OCI-LY7 (cell line): ENCODE measurements at regions of chr11 and their contacts with region 1.

Region 1: GRCh38 chr11:65134386-65135253 is at the start of gene SYVN1:
- DNase-seq: peak; percentile 96
- H3K4me3 ChIP-seq: peak within 1 kb of the TSS; percentile 98
- H3K27ac ChIP-seq: peak within 1 kb of the TSS; percentile 98
- H3K4me1 ChIP-seq: peaks cover 41% of the 10 kb centered on the region
- CTCF ChIP-seq: no peak
- total RNA-seq, gene SYVN1: 102 and 134 TPM in 2 replicates

Region 2: DNA sequence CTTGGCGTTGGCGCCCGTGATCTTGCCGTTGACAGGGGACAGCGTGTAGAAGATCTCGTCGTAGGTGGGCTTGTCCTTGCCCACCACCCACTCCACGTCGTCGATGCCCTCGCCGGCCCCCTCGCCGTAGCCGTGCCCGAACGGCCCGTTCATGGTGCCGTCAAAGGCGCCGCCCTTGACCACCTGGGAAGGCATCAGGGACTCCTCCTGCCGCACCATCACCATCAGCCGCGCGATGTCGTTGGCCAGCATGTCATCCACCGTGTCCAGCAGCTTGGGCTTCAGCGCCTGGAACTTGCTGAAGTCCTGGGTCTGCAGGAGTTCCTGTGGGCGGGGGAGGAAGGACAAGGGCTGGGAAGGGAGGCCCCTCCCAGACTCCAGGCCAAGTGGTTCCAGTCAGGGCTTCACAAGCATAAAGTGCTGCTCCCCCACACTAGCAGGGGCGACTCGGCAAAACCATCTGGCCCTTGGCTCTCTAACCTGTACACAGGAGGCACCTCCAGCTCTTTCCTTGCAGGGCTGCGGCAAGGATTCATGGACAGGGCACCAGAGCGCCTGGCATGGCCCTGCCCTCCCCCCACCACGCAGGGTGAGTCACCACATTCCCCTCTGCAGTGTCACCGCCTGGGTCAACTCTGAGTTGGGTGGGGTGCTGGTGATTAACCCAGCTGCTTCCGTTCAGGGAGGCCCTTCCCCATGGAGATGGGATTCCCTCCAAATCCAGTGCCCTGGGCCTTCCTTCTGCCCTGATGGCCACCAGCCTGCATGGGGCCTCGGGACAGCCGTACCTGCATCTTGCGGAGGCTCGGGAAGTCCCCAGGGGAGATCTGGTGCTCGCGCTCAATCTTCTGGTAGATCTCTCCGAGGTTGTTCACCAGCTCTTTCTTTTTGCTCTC is 279.8 kb before region 1 on chr11:
- CTCF ChIA-PET with region 1: interaction called, 5 read pairs
- POLR2A ChIA-PET with region 1: no interaction called
- intact Hi-C with region 1: loop called (anchors 5 kb)
- DNase-seq: no peak
- H3K4me3 ChIP-seq: no peak overlapping the region
- H3K27ac ChIP-seq: peak overlapping the region; percentile 92
- H3K4me1 ChIP-seq: peaks cover 90% of the 10 kb centered on the region
- CTCF ChIP-seq: no peak

Region 3: GRCh38 chr11:64969209-64969608 is 165.4 kb before region 1 on chr11:
- CTCF ChIA-PET with region 1: no interaction called
- POLR2A ChIA-PET with region 1: no interaction called
- intact Hi-C with region 1: no loop called
- DNase-seq: no peak
- H3K4me3 ChIP-seq: no peak overlapping the region
- H3K27ac ChIP-seq: no peak overlapping the region
- H3K4me1 ChIP-seq: peaks cover 50% of the 10 kb centered on the region
- CTCF ChIP-seq: no peak

Region 4: GRCh38 chr11:65090628-65091027 is 44.0 kb before region 1 on chr11:
- CTCF ChIA-PET with region 1: no interaction called
- POLR2A ChIA-PET with region 1: no interaction called
- intact Hi-C with region 1: no loop called
- DNase-seq: no peak
- H3K4me3 ChIP-seq: no peak overlapping the region
- H3K27ac ChIP-seq: no peak overlapping the region
- H3K4me1 ChIP-seq: peaks cover 12% of the 10 kb centered on the region
- CTCF ChIP-seq: no peak

Region 5: GRCh38 chr11:65111744-65112414 is 22.7 kb before region 1 on chr11 and contains the start of gene TM7SF2:
- CTCF ChIA-PET with region 1: no interaction called
- POLR2A ChIA-PET with region 1: interaction called, 10 read pairs
- intact Hi-C with region 1: loop called (anchors 1 kb)
- DNase-seq: peak; percentile 97
- H3K4me3 ChIP-seq: peak within 1 kb of the TSS; percentile 69
- H3K27ac ChIP-seq: peak within 1 kb of the TSS; percentile 73
- H3K4me1 ChIP-seq: peaks cover 55% of the 10 kb centered on the region
- CTCF ChIP-seq: no peak
- total RNA-seq, gene TM7SF2: 25.8 and 30.1 TPM in 2 replicates

Region 6: DNA sequence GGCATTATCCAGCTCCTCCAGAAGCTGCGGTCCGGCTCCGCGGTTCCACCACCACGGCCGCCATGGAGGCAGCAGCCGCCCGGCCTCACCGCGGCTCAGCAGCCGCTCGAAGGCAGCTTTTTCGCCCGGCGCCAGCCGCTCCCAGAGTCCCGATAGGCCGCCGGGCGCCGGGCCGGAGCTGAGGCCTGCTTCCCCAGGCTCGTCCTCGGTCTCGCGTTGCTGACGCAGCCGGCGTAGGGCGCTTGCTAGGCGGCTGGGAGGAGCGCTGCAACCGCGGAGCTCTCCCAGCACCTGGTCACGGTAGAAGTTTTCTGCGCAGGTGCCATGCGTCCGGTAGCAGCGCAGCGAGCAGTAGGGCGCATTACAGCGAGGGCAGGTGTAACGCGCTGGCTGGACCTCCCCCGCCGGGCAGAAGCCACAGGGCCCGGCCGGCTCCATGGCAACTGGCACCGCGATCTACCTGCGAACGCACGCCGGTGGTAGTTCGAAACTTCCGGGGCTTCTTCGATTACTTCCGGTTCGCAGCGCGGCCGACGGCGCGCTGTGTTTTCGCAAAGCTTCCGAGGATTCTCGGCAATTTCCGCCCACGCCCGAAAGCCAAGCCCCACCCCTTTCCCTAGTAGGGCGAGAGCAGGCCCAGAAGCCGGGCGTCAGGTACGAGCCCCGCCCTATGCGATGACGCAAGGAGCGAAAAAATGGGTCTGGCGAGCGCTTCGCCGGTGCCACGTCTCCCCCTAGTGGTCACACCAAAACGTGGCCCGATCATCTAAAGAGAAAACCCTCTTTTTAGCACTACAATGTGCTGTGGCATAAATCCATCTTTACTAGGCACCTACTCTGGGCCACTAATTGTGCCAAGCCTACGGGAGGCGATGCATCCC is 17.2 kb before region 1 on chr11 and contains the start of gene ZNHIT2:
- CTCF ChIA-PET with region 1: no interaction called
- POLR2A ChIA-PET with region 1: interaction called, 47 read pairs
- intact Hi-C with region 1: loop called (anchors 1 kb)
- DNase-seq: peak; percentile 100
- H3K4me3 ChIP-seq: peak within 1 kb of the TSS; percentile 81
- H3K27ac ChIP-seq: peak within 1 kb of the TSS; percentile 78
- H3K4me1 ChIP-seq: peaks cover 62% of the 10 kb centered on the region
- CTCF ChIP-seq: peak; percentile 92
- total RNA-seq, gene ZNHIT2: 29.9 and 32.4 TPM in 2 replicates

Region 7: GRCh38 chr11:65147352-65148075 is 12.9 kb after region 1 on chr11:
- CTCF ChIA-PET with region 1: no interaction called
- POLR2A ChIA-PET with region 1: interaction called, 10 read pairs
- intact Hi-C with region 1: no loop called
- DNase-seq: no peak
- H3K4me3 ChIP-seq: no peak overlapping the region
- H3K27ac ChIP-seq: no peak overlapping the region
- H3K4me1 ChIP-seq: peaks cover 25% of the 10 kb centered on the region
- CTCF ChIP-seq: no peak

Region 8: DNA sequence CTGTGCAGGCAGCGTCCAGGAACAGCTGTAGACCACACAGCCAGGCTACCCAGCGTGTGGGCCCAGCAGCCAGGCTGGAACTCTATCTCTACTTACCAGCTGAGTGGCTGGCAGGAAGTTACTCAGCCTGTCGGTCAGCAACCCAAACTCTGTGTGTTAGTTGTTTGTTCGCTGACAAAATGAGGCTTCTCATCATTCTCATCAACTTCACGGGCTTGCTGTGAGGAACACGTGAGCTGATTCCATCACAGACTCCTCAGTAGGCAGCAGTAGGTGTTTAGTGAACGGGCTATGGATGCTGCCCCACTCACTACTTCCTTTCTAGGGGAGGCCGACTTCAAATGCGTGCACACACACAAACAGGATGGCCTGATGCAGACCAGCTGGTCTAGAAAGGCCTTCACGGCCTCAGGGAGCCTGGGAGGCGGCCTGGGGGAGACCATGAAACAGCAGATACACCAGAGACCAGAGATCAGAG is 34.6 kb after region 1 on chr11:
- CTCF ChIA-PET with region 1: no interaction called
- POLR2A ChIA-PET with region 1: interaction called, 16 read pairs
- intact Hi-C with region 1: loop called (anchors 5 kb)
- DNase-seq: peak; percentile 48
- H3K4me3 ChIP-seq: no peak overlapping the region
- H3K27ac ChIP-seq: peak overlapping the region; percentile 54
- H3K4me1 ChIP-seq: peaks cover 32% of the 10 kb centered on the region
- CTCF ChIP-seq: no peak

Region 9: DNA sequence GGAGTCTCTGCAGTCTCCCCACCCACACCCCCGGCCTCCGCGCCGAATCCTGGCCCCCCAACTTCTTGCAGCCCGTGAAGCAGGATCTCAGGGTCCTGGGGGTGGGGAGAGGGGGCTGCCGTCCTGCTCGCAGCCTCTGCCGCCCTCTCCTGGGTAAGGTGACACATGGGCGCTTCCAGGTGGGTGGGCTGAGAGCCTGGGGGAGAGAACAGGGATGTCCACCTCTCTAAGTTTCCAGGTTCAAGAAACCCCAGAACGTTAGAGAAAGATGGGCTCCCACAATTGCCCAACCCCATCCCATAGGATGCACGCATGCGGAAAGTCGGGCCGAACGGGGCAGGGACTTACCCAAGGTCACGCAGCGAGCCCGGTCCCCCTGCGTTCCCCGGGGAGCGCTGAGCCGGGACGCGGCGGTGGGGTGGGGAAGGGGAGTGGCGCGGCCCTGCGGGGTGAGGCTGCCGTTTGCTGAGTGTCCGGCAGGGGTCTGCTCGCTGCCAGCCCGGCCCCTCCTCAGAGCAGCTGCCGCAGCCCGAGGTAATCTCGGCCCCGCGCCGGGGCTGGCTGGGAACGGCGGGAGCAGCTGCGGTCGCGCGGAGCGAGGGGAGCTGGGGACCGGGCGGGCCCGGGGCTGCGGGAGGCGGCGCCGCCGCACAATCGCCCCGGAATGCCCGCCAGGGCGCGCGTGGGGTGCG is 46.4 kb after region 1 on chr11:
- CTCF ChIA-PET with region 1: interaction called, 5 read pairs
- POLR2A ChIA-PET with region 1: interaction called, 13 read pairs
- intact Hi-C with region 1: loop called (anchors 1 kb)
- DNase-seq: peak; percentile 83
- H3K4me3 ChIP-seq: peak overlapping the region; percentile 91
- H3K27ac ChIP-seq: peak overlapping the region; percentile 64
- H3K4me1 ChIP-seq: peaks cover 26% of the 10 kb centered on the region
- CTCF ChIP-seq: peak; percentile 89